ENCODE measurements at regions of chrX and their contacts with region 1.

Region 1: GRCh38 chrX:49915361-49916222 is 6.8 kb upstream of the CLCN5 start:
- DNase-seq: no peak
- ATAC-seq: peak; percentile 90
- H3K4me3 ChIP-seq: no peak overlapping the region
- H3K27ac ChIP-seq: no peak overlapping the region
- H3K4me1 ChIP-seq: no peaks in the 10 kb centered on the region
- H3K27me3 ChIP-seq: no peaks in the 10 kb centered on the region
- CTCF ChIP-seq: peak; percentile 81 to 92 (median 85)
- EP300 ChIP-seq: no peak
- POLR2A ChIP-seq: no peak
- RAD21 ChIP-seq: peak; percentile 93

Region 2: DNA sequence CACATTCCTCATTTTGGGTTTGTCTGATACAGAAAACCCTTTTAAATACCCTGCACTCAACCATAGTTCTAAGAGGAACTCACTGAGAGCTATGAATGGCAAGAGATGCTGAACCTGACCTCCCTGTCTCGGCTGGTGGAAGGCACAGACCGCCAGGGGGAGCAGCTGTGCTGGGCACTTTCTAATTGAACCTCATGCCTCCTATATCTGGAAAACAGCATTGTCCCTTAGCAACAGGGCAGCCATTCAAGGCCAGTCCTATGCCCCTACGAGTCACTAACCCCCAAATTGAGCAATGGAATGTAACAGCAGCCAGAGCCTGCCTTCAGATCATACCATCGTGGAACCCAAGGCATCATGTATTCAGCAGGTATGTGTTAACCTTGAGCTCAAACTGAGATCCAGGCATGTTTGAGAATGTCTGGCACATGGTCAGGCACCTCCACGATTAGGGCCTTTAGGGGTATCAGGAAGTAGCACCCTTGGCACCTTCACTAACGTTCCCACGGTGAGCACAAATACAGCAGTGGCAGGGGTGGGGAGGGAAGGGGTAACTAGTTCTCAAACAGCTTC is 31.2 kb before region 1 on chrX:
- CTCF ChIA-PET with region 1: interaction called, 72 read pairs
- POLR2A ChIA-PET with region 1: no interaction called
- RAD21 ChIA-PET with region 1: interaction called, 16 read pairs
- SMC1A ChIA-PET with region 1: interaction called, 22 read pairs
- in situ Hi-C with region 1: no loop called
- intact Hi-C with region 1: loop called (anchors 5 kb)
- DNase-seq: peak; percentile 7
- ATAC-seq: peak; percentile 80
- H3K4me3 ChIP-seq: no peak overlapping the region
- H3K27ac ChIP-seq: no peak overlapping the region
- H3K4me1 ChIP-seq: no peaks in the 10 kb centered on the region; the same call in 1 of the 2 replicates
- H3K27me3 ChIP-seq: no peaks in the 10 kb centered on the region
- CTCF ChIP-seq: peak; percentile 76 to 88 (median 83)
- EP300 ChIP-seq: no peak
- POLR2A ChIP-seq: no peak
- RAD21 ChIP-seq: peak; percentile 45; the same call in 1 of the 2 replicates

Region 3: DNA sequence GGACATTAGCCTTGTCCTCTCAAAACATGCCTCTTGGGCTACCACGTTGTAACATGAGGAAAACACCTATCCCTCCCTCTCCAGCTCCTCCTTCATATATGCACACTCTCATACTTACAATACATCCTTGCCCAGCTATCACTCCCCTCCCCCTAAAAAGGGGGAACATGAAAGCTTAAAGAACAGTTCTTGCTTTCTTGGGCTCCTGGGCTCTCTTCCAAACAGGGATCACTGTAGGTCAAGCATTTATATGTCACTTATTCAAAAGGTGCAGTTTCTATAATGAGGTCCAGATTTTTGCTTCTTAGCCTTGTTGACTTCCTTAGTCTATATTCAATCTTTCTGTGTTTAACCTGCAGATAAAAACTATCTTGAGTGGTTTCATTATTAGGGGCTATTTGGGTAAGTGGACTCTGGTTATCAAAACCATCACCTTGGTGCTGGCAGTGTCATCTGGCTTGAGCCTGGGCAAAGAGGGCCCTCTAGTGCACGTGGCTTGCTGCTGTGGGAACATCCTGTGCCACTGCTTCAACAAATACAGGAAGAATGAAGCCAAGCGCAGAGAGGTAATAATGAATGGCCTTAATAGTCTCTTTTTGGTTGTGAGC is 165.8 kb after region 1 on chrX:
- CTCF ChIA-PET with region 1: interaction called, 13 read pairs
- POLR2A ChIA-PET with region 1: no interaction called
- RAD21 ChIA-PET with region 1: interaction called, 9 read pairs
- SMC1A ChIA-PET with region 1: interaction called, 4 read pairs
- in situ Hi-C with region 1: no loop called
- intact Hi-C with region 1: loop called (anchors 5 kb)
- DNase-seq: no peak
- ATAC-seq: peak; percentile 43; the same call in 2 of the 3 replicates
- H3K4me3 ChIP-seq: no peak overlapping the region
- H3K27ac ChIP-seq: no peak overlapping the region
- H3K4me1 ChIP-seq: no peaks in the 10 kb centered on the region
- H3K27me3 ChIP-seq: no peaks in the 10 kb centered on the region
- CTCF ChIP-seq: peak; percentile 29 to 38 (median 35); a peak in 3 of 6 replicates
- EP300 ChIP-seq: no peak
- POLR2A ChIP-seq: no peak
- RAD21 ChIP-seq: peak; percentile 62

Region 4: DNA sequence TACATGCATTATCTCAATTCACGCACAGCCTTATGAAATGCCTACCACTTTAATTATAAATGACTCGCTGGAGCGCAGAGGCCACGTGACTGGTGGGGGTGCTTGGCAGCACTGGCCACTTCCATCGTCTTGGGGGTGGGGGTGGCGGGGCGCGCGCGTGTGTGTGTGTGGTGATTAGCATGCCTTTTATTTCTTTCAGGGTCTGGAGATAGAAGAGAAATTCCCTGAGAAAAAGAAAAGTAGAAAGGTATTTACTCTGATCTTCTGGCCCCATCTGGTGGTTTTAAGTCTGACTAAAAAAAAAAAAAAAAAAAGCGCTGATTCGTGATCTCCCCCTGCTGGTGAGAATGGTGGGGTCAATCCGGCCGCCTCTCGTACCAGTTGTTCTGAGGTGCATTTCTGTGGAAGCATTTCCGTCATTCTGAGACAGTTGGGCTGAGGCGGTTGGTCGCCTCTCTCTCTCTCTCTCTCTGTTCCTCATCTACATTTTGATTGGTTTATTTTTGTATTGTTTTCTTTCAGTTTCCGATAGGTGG is 288.8 kb after region 1 on chrX and contains the start of gene CCNB3:
- CTCF ChIA-PET with region 1: interaction called, 10 read pairs
- POLR2A ChIA-PET with region 1: no interaction called
- RAD21 ChIA-PET with region 1: interaction called, 3 read pairs
- SMC1A ChIA-PET with region 1: interaction called, 8 read pairs
- in situ Hi-C with region 1: no loop called
- intact Hi-C with region 1: loop called (anchors 1 kb)
- DNase-seq: peak; percentile 36
- ATAC-seq: peak; percentile 100
- H3K4me3 ChIP-seq: no peak within 1 kb of the TSS; the same call in 1 of the 2 replicates
- H3K27ac ChIP-seq: no peak within 1 kb of the TSS; the same call in 1 of the 2 replicates
- H3K4me1 ChIP-seq: no peaks in the 10 kb centered on the region; the same call in 1 of the 2 replicates
- H3K27me3 ChIP-seq: no peaks in the 10 kb centered on the region
- CTCF ChIP-seq: peak; percentile 61 to 72 (median 71)
- EP300 ChIP-seq: 0 out of 4 replicates have a peak, but pooled peaks of 1 of the 2 experiments have one; percentile 15
- POLR2A ChIP-seq: no peak
- RAD21 ChIP-seq: peak; percentile 51
- polyA plus RNA-seq, gene CCNB3: 0.16 TPM in 1 of 2 experiments, not detected in the other